ENCODE measurements at regions of chr2 and their contacts with region 1.

Region 1: DNA sequence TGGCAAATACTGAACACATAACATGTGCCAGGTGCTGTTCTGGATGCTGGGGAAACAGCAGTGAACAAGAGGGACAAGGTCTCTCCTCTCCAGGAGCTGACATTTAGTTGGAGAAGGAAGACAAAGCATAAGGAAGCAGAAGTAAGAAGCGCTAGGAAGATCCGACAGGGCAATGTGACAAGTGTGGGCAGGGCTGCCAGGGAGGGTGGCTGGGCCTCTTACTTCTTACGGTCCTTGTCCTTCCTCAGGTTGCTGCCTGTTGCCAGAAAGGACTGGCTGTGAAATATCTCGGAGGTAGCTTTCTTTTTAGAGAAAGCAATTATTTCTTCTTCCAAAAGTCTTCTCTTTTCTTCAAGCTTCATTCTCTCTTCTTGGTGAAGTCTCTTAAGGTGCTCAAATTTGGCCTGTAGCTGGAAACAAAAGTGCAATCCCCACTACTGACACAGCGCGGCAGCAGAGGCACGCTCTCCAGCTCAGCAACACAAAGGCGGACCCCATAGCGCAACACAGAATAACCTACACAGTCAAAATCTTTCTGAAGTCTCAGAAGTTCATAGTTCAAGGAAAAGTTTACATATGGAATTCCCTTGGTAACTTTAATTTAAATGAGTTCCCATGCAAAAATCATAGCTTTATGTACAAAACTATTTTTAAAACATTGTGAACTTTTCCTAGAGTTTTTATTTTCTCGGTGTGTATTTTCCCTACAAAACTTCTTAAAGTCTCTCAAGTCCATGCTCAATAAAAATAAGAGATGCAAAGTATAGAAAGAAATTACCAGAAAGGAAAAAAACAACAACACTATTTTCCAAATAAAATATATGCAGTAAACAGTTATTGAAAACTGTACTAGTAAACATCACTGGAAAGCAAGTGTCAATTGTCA is 67.7 kb downstream of the SEPTIN10 start:
- DNase-seq: peak; percentile 77
- H3K4me3 ChIP-seq: no peak overlapping the region
- H3K27ac ChIP-seq: no peak overlapping the region
- H3K4me1 ChIP-seq: no peaks in the 10 kb centered on the region
- H3K27me3 ChIP-seq: no peaks in the 10 kb centered on the region
- CTCF ChIP-seq: peak; percentile 91

Region 2: DNA sequence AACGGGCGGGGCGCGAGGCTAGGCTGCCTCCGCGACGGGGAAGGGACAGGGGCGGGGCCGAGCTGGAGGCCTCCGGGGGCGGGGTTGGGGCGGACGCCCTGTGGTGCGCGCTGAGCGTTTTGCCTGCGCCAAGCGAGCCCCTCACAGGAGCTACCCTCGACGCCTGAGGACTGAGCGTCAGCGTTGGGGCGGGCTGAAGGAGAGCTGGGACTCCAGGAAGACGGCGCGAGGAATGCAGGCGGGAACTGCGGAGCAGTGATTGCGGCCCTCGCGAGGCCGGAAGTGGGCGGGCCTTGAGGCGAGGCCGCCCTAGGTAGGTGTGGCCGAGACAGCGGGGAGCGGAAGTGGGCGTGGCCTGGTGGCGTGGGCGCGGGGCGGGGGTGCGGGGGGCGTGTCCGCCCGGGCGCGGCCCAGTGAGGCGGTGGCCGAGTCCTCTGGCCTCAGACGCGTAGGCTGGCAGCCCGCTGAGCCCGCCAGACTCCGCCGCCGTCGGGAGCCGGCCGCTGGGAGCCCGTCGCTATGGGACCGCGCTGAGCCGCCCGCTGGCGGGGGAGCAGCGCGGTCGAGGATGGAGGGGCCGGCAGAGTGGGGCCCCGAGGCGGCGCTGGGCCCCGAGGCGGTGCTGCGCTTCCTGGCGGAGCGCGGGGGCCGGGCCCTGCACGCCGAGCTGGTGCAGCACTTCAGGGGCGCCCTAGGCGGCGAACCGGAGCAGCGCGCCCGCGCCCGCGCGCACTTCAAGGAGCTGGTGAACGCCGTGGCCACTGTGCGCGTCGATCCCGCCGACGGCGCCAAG is 68.0 kb after region 1 on chr2 and contains the starts of genes SEPTIN10 and SOWAHC:
- CTCF ChIA-PET with region 1: interaction called, 4 read pairs
- POLR2A ChIA-PET with region 1: no interaction called
- intact Hi-C with region 1: loop called (anchors 5 kb)
- DNase-seq: peak; percentile 99
- H3K4me3 ChIP-seq: peak within 1 kb of the TSS; percentile 65
- H3K27ac ChIP-seq: peak within 1 kb of the TSS; percentile 89
- H3K4me1 ChIP-seq: peaks cover 28% of the 10 kb centered on the region
- H3K27me3 ChIP-seq: no peaks in the 10 kb centered on the region
- CTCF ChIP-seq: no peak
- total RNA-seq, gene SEPTIN10: 106 and 118 TPM in 2 replicates
- total RNA-seq, gene SOWAHC: 10.6 and 13.1 TPM in 2 replicates

Region 3: DNA sequence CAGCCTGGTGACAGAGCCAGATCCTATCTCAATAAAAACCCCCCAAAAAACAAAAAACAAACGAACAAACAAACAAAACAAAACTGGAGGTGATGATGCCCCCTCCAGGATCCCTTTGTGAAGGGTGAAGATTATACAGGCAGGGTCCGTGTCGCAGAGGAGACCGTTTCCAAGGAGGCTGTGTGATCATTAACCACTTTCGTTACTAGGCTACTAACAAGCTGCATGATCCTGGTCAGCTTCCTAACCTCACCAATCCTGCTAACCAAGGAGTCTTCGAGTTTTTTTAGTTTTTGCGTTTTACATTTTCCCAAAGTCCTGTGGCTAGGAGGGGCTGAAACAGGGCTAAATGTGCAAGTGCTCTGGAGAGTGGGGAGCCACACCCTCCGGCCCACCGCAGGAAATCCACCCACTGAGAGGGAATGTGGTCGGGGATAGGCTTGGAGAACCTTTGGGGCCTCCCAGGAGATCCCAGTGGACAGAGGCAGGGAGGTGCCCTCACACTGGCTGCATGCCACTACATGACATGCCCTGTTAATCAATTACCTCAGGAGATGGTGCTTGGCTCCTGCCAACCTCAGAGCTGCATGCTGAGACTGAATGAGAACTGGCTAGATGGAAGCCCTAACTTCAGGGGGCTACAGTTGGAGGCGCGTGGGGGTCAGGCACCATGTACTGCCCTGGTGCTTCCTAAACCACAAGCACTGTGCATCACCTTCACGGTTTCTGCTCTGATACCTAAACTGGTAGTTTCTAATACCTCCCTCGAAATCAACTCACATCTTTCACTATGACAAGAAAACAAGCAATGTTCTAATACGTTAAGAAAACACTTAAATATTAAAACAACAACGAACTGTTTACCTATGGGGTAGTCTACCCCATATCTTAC is 180.6 kb after region 1 on chr2:
- CTCF ChIA-PET with region 1: no interaction called
- POLR2A ChIA-PET with region 1: no interaction called
- intact Hi-C with region 1: loop called (anchors 5 kb)
- DNase-seq: no peak
- H3K4me3 ChIP-seq: no peak overlapping the region
- H3K27ac ChIP-seq: no peak overlapping the region
- H3K4me1 ChIP-seq: no peaks in the 10 kb centered on the region
- H3K27me3 ChIP-seq: no peaks in the 10 kb centered on the region
- CTCF ChIP-seq: no peak

Region 4: GRCh38 chr2:109736177-109736827 is 190.2 kb after region 1 on chr2:
- CTCF ChIA-PET with region 1: interaction called, 12 read pairs
- POLR2A ChIA-PET with region 1: no interaction called
- intact Hi-C with region 1: loop called (anchors 1 kb)
- DNase-seq: peak; percentile 71
- H3K4me3 ChIP-seq: no peak overlapping the region
- H3K27ac ChIP-seq: no peak overlapping the region
- H3K4me1 ChIP-seq: no peaks in the 10 kb centered on the region
- H3K27me3 ChIP-seq: no peaks in the 10 kb centered on the region
- CTCF ChIP-seq: peak; percentile 76